Mammary epithelial cell (primary cell): ENCODE measurements at regions of chr11 and their contacts with region 1.

Region 1: GRCh38 chr11:46160100-46160499 is 38.8 kb upstream of the PHF21A start:
- DNase-seq: no peak
- H3K4me3 ChIP-seq: no peak overlapping the region
- H3K27ac ChIP-seq: no peak overlapping the region
- H3K4me1 ChIP-seq: peaks cover 15% of the 10 kb centered on the region
- H3K27me3 ChIP-seq: no peaks in the 10 kb centered on the region
- CTCF ChIP-seq: peak in 1 of 2 donors; percentile 22

Region 2: GRCh38 chr11:46116007-46116711 is 43.9 kb before region 1 on chr11:
- CTCF ChIA-PET with region 1: interaction called, 13 read pairs
- dilution Hi-C with region 1: no loop called
- in situ Hi-C with region 1: no loop called
- intact Hi-C with region 1: loop called (anchors 2 kb)
- DNase-seq: no peak
- H3K4me3 ChIP-seq: no peak overlapping the region
- H3K27ac ChIP-seq: no peak overlapping the region
- H3K4me1 ChIP-seq: peaks cover 10% of the 10 kb centered on the region
- H3K27me3 ChIP-seq: no peaks in the 10 kb centered on the region
- CTCF ChIP-seq: no peak

Region 3: DNA sequence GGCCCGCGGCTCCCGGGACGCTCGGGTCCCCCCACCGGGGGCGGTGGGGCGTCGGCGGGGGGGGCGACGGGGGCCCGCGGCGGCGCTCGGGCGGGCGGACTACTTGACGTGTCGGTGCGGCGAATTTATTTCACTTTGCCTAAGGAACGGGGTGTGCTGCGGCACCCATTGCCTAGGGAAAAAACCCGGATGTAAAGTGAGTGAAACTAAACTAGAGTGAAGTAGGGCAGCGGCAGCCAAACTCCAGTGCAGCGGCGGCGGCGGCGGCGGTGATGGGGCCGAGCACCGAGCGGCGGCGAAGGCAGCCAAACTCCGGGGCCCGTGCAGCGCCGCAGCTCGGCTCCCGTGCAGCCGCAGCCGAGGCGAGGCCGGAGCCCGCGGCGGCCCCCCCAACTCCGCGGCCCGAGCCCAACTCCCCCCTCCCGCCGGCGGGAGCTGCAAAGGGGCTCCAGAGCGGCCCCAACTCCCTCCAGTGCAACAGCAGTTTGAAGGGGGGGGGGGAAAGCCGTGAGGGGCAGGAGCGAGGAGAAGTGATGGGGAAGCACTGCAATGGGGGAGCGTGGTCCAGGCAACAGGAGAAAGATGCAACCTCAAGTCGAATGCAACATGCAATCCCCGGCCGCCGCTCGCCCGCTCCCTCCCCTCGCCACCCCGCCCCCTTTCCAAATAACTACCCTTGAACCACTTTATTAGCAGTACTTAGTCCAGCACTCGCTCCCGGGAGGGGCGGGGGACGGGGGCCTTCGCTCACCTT is 38.2 kb before region 1 on chr11:
- CTCF ChIA-PET with region 1: no interaction called
- dilution Hi-C with region 1: no loop called
- in situ Hi-C with region 1: no loop called
- intact Hi-C with region 1: loop called (anchors 2 kb)
- DNase-seq: peak; percentile 85
- H3K4me3 ChIP-seq: peak overlapping the region; percentile 66 to 77 (median 73)
- H3K27ac ChIP-seq: peak overlapping the region; percentile 18
- H3K4me1 ChIP-seq: peaks cover 11% of the 10 kb centered on the region
- H3K27me3 ChIP-seq: no peaks in the 10 kb centered on the region
- CTCF ChIP-seq: no peak

Region 4: GRCh38 chr11:46127150-46127638 is 32.9 kb before region 1 on chr11:
- CTCF ChIA-PET with region 1: interaction called, 26 read pairs
- dilution Hi-C with region 1: no loop called
- in situ Hi-C with region 1: no loop called
- intact Hi-C with region 1: no loop called
- DNase-seq: peak; percentile 73
- H3K4me3 ChIP-seq: no peak overlapping the region
- H3K27ac ChIP-seq: no peak overlapping the region
- H3K4me1 ChIP-seq: peaks cover 7% of the 10 kb centered on the region
- H3K27me3 ChIP-seq: no peaks in the 10 kb centered on the region
- CTCF ChIP-seq: peak; percentile 55 to 67

Region 5: DNA sequence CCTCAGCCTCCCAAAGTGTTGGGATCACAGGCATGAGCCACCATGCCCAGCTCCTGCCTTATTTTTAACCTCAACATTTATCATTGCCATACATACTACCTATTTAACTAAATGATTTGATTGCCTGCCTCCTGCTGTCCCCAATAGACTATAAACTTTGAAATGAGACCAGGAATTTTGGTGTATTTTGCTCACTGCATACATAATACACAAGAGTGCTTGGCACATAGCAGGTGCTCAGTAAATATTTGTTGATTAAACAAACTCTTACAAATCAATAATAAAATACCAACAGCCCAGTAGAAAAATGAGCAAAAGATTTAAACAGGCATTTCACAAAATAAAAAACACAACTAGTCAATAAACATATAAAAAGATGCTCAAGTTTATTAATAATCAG is 10.7 kb after region 1 on chr11:
- CTCF ChIA-PET with region 1: no interaction called
- dilution Hi-C with region 1: no loop called
- in situ Hi-C with region 1: no loop called
- intact Hi-C with region 1: no loop called
- DNase-seq: no peak
- H3K4me3 ChIP-seq: no peak overlapping the region
- H3K27ac ChIP-seq: no peak overlapping the region
- H3K4me1 ChIP-seq: no peaks in the 10 kb centered on the region
- H3K27me3 ChIP-seq: no peaks in the 10 kb centered on the region
- CTCF ChIP-seq: no peak

Region 6: GRCh38 chr11:46659908-46660307 is 499.8 kb after region 1 on chr11:
- CTCF ChIA-PET with region 1: no interaction called
- dilution Hi-C with region 1: no loop called
- in situ Hi-C with region 1: no loop called
- intact Hi-C with region 1: no loop called
- DNase-seq: no peak
- H3K4me3 ChIP-seq: no peak overlapping the region
- H3K27ac ChIP-seq: no peak overlapping the region
- H3K4me1 ChIP-seq: peaks cover 10% of the 10 kb centered on the region
- H3K27me3 ChIP-seq: no peaks in the 10 kb centered on the region
- CTCF ChIP-seq: no peak

Region 7: GRCh38 chr11:46769636-46770221 is 609.6 kb after region 1 on chr11:
- CTCF ChIA-PET with region 1: no interaction called
- dilution Hi-C with region 1: no loop called
- in situ Hi-C with region 1: no loop called
- intact Hi-C with region 1: no loop called
- DNase-seq: no peak
- H3K4me3 ChIP-seq: no peak overlapping the region
- H3K27ac ChIP-seq: no peak overlapping the region
- H3K4me1 ChIP-seq: no peaks in the 10 kb centered on the region
- H3K27me3 ChIP-seq: no peaks in the 10 kb centered on the region
- CTCF ChIP-seq: no peak